Motor neuron (in vitro differentiated cells): ENCODE measurements at regions of chr4 and their contacts with region 1.

Region 1: DNA sequence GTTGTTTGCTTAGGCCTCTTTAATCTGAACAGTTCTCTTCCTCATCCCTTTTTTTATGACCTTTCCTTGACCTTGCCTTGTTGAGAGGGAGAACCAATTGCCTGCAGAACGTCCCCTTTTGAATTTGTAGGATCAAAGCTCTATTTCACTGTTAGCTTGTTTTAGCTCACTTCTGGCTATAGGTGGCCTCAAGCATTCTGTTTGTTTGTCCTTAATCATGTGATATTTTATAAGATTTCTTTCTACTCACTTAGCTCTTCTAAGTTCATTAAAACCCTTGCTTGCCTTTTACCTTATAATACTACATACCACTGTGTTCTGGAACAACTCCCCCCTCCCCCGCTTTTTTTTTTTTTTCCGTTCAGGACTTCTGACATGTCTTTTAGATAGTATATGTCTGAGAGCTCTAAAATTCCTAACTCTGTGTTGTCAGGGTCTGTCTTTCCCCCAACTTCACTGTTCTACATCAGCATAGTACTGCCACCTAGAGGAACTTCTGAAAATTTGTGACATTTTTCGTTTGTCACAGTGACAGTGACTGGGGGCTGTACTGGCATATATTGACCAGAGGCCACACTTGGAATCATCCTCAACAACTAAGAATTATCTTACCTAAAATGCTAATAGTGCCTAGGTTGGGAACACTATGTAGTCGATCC is 128.5 kb downstream of the LARP7 start:
- ATAC-seq: peak in 7 of 8 experiments; percentile 25 to 84 (median 44)
- H3K4me3 ChIP-seq: no peak overlapping the region
- H3K27ac ChIP-seq: no peak overlapping the region
- H3K4me1 ChIP-seq: peaks cover 0 to 3% of the 10 kb centered on the region in 2 donors

Region 2: GRCh38 chr4:112330921-112331320 is 434.5 kb before region 1 on chr4:
- in situ Hi-C with region 1: no loop called
- ATAC-seq: no peak
- H3K4me3 ChIP-seq: no peak overlapping the region
- H3K27ac ChIP-seq: no peak overlapping the region
- H3K4me1 ChIP-seq: peaks cover 9 to 15% of the 10 kb centered on the region in 2 donors

Region 3: GRCh38 chr4:112706840-112707207 is 58.6 kb before region 1 on chr4:
- in situ Hi-C with region 1: no loop called
- ATAC-seq: peak in 5 of 8 experiments; percentile 7 to 21 (median 15)
- H3K4me3 ChIP-seq: peak overlapping the region; percentile 72 to 89 (median 74)
- H3K27ac ChIP-seq: peak overlapping the region; percentile 78 to 89
- H3K4me1 ChIP-seq: peaks cover 2 to 15% of the 10 kb centered on the region in 2 donors

Region 4: DNA sequence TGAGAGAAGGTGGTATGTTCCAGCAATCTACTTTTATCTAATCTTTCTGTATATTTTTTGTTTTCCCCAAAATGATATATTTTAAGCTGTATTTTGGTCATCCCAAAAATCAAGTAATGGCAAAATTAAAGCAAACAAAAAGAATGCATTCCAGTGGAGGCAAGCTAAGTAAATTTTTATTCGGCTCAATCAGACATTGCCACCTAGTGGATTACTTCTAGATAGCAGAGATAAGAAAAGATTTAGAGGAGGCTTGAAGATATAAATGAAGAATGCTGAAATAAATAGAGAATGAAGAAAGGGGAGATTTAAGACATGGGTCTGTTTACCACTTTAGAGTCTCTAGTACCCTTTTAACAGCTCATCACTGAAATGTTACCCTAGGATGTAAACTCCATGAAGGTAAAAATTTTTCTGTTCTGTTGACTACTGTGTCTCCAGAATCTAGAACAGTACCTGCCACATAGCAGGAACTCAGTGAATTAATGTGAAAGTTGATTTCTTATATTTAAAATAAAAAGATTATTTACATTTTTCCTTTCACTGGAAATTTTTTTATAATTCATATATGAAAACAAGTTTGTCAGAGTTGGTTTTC is 173.1 kb after region 1 on chr4:
- in situ Hi-C with region 1: loop called in 3 of 9 experiments (anchors 5 to 25 kb)
- ATAC-seq: peak in 4 of 8 experiments; percentile 27 to 45 (median 40)
- H3K4me3 ChIP-seq: no peak overlapping the region
- H3K27ac ChIP-seq: no peak overlapping the region
- H3K4me1 ChIP-seq: peaks cover 3 to 17% of the 10 kb centered on the region in 2 donors

Region 5: DNA sequence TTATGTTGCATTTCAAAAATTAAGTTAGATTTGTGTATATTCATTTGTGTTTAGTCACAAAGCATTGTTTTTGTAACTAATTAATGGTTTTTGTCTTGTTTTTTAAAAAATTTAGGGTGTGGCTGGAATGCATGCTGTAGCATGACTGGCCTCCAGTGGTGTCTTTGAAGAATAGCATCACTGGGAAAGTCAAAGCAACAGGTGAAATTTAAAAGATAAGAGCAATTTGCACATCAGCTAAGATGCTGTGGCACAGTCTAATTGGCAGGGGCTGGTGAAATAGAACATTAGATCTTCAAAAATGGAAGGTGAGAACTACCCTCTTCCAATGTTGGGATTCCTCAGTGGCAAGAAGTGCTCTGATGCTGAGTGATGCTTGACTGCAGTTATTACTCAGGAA is 329.4 kb after region 1 on chr4:
- in situ Hi-C with region 1: loop called in 1 of 9 experiments (anchors 25 kb)
- ATAC-seq: peak in 1 of 8 experiments; percentile 27
- H3K4me3 ChIP-seq: no peak overlapping the region
- H3K27ac ChIP-seq: no peak overlapping the region
- H3K4me1 ChIP-seq: no peaks in the 10 kb centered on the region